A673 (cell line): ENCODE measurements at regions of chr9 and their contacts with region 1.

Region 1: GRCh38 chr9:28423255-28423654 is 850.0 kb upstream of the C9orf72 start:
- DNase-seq: no peak
- H3K4me3 ChIP-seq: no peak overlapping the region
- H3K27ac ChIP-seq: no peak overlapping the region
- H3K4me1 ChIP-seq: no peaks in the 10 kb centered on the region
- H3K27me3 ChIP-seq: no peaks in the 10 kb centered on the region
- CTCF ChIP-seq: no peak

Region 2: GRCh38 chr9:28443461-28443860 is 20.2 kb after region 1 on chr9:
- CTCF ChIA-PET with region 1: no interaction called
- POLR2A ChIA-PET with region 1: no interaction called
- intact Hi-C with region 1: no loop called
- DNase-seq: no peak
- H3K4me3 ChIP-seq: no peak overlapping the region
- H3K27ac ChIP-seq: no peak overlapping the region
- H3K4me1 ChIP-seq: no peaks in the 10 kb centered on the region
- H3K27me3 ChIP-seq: no peaks in the 10 kb centered on the region
- CTCF ChIP-seq: no peak

Region 3: GRCh38 chr9:28471261-28471660 is 48.0 kb after region 1 on chr9:
- CTCF ChIA-PET with region 1: no interaction called
- POLR2A ChIA-PET with region 1: no interaction called
- intact Hi-C with region 1: loop called (anchors 10 kb)
- DNase-seq: peak; percentile 5
- H3K4me3 ChIP-seq: no peak overlapping the region
- H3K27ac ChIP-seq: no peak overlapping the region
- H3K4me1 ChIP-seq: no peaks in the 10 kb centered on the region
- H3K27me3 ChIP-seq: no peaks in the 10 kb centered on the region
- CTCF ChIP-seq: no peak